Natural killer cell (primary cell): ENCODE measurements at regions of chr4 and their contacts with region 1.

Region 1: GRCh38 chr4:94451695-94452475 is at the start of gene PDLIM5:
- DNase-seq: peak; percentile 84 to 95
- ATAC-seq: peak; percentile 94 to 98 (median 95)
- H3K4me3 ChIP-seq: peak within 1 kb of the TSS; percentile 96
- H3K4me3 Mint-ChIP-seq: peak within 1 kb of the TSS; percentile 91
- H3K27ac ChIP-seq: peak within 1 kb of the TSS; percentile 80
- H3K27ac Mint-ChIP-seq: peak within 1 kb of the TSS; percentile 77 to 87
- H3K4me1 ChIP-seq: peaks cover 10% of the 10 kb centered on the region
- H3K4me1 Mint-ChIP-seq: peaks cover 24 to 26% of the 10 kb centered on the region in 2 donors
- H3K27me3 ChIP-seq: peaks cover 17% of the 10 kb centered on the region
- H3K27me3 Mint-ChIP-seq: peaks cover 11 to 24% of the 10 kb centered on the region in 2 donors
- CTCF ChIP-seq: no peak
- total RNA-seq, gene PDLIM5: 41.8 to 94.8 (median 50.5) TPM

Region 2: DNA sequence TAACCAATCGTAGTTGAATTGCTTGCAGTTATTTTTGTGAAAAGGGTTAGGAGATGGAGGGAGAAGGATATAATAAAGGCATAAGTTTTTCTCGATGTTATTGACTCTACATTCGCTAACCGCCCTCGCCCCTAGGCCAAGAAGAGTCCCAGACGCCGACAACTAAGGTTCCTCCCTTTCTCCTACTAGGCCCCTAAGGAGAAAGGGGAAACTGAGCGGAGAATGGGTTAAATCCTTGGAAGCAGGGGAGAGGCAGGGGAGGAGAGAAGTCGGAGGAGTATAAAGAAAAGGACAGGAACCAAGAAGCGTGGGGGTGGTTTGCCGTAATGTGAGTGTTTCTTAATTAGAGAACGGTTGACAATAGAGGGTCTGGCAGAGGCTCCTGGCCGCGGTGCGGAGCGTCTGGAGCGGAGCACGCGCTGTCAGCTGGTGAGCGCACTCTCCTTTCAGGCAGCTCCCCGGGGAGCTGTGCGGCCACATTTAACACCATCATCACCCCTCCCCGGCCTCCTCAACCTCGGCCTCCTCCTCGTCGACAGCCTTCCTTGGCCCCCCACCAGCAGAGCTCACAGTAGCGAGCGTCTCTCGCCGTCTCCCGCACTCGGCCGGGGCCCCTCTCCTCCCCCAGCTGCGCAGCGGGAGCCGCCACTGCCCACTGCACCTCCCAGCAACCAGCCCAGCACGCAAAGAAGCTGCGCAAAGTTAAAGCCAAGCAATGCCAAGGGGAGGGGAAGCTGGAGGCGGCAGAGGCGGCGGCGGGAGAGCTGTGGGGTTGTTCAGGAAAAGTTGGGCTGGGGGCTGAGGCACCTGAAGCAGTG is 617.4 kb before region 1 on chr4:
- intact Hi-C with region 1: no loop called
- DNase-seq: no peak
- ATAC-seq: no peak
- H3K4me3 ChIP-seq: no peak overlapping the region
- H3K4me3 Mint-ChIP-seq: no peak overlapping the region
- H3K27ac ChIP-seq: no peak overlapping the region
- H3K27ac Mint-ChIP-seq: no peak overlapping the region
- H3K4me1 ChIP-seq: no peaks in the 10 kb centered on the region
- H3K4me1 Mint-ChIP-seq: no peaks in the 10 kb centered on the region
- H3K27me3 ChIP-seq: peaks cover 32% of the 10 kb centered on the region
- H3K27me3 Mint-ChIP-seq: peaks cover 44 to 57% of the 10 kb centered on the region in 2 donors
- CTCF ChIP-seq: no peak

Region 3: DNA sequence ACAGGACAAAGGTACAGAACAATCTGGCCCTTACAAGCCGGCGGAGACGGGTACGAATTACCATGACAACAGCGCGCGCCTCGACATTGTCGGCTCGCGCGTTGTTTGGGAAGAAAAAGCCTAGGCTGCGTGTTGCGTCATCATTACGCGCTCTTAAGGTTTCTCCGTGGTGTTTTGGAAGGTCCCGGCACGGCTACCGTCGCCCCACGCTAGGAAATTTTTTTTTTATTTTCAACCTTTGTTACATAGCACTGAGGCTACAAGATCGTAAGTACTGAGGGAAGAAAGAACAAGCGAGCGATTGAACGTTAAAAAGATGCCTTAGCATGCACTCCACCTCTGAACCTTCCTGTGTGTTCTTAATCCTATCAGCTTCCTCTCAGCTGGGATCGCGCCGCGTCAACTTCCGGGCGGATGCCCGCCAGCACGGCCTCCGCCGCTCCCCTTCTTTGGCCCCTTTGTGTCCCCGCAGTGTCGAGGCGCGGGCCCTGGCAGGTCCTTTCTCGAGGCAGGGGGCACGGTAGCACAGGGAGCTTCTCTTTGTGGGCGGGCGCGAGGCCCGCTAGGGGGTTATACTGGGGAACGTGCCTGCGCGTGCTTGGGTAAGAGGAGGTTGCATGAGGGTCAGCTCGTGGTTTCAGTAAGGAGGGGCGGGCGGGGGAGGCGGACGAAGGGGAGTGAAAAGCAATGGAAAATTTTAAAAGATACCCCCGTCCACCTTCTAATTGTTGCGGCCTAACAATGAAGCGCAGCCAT is 244.2 kb before region 1 on chr4 and contains the start of gene SMARCAD1:
- intact Hi-C with region 1: loop called (anchors 5 kb)
- DNase-seq: peak; percentile 81 to 96
- ATAC-seq: peak; percentile 87 to 92 (median 88)
- H3K4me3 ChIP-seq: peak within 1 kb of the TSS; percentile 64
- H3K4me3 Mint-ChIP-seq: peak within 1 kb of the TSS; percentile 95
- H3K27ac ChIP-seq: peak within 1 kb of the TSS; percentile 84
- H3K27ac Mint-ChIP-seq: peak within 1 kb of the TSS; percentile 98 to 99
- H3K4me1 ChIP-seq: peaks cover 12% of the 10 kb centered on the region
- H3K4me1 Mint-ChIP-seq: peaks cover 20 to 40% of the 10 kb centered on the region in 2 donors
- H3K27me3 ChIP-seq: no peaks in the 10 kb centered on the region
- H3K27me3 Mint-ChIP-seq: peaks cover 7 to 11% of the 10 kb centered on the region in 2 donors
- CTCF ChIP-seq: no peak
- total RNA-seq, gene SMARCAD1: 15.5 to 20.3 (median 15.9) TPM

Region 4: DNA sequence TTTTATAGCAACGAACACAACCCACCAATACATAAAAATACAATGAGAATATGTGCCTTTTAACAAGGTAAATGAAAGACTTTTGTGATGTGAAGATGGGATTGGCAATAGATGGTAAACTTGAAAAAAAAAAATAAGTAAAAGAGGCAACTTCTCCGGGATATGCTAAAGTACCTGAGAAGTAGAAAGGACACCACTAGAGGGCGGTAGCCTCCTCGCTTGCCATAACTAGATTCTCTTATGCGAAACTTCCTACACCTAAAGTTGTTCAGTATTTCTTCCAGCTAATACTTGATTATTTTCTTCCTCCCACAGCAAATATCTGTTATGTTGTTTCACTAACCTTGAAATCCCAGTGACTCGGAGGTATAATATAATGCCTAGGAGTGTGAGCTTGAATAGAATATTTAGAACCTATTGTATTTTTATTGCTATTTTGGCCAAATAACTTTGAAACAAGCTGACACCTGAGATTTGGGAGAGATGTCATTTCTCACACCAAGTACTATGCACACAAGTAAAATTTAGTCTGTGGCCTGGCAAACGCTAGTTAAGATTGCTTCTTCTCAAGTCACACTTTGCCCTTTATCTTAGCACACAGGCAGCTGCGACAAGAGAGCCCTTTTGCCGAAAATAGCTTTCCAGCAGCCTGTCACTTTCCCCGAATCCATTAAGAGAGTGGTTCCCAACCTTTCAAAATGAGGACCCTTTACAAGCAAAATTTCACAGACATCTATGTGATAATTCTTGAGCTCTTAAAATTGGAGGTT is 45.0 kb before region 1 on chr4:
- intact Hi-C with region 1: loop called (anchors 1 kb)
- DNase-seq: peak; percentile 22 to 86
- ATAC-seq: peak; percentile 64 to 85 (median 79)
- H3K4me3 ChIP-seq: no peak overlapping the region
- H3K4me3 Mint-ChIP-seq: no peak overlapping the region
- H3K27ac ChIP-seq: no peak overlapping the region
- H3K27ac Mint-ChIP-seq: no peak overlapping the region
- H3K4me1 ChIP-seq: no peaks in the 10 kb centered on the region
- H3K4me1 Mint-ChIP-seq: no peaks in the 10 kb centered on the region
- H3K27me3 ChIP-seq: no peaks in the 10 kb centered on the region
- H3K27me3 Mint-ChIP-seq: peaks cover 3 to 12% of the 10 kb centered on the region in 2 donors
- CTCF ChIP-seq: peak; percentile 91

Region 5: DNA sequence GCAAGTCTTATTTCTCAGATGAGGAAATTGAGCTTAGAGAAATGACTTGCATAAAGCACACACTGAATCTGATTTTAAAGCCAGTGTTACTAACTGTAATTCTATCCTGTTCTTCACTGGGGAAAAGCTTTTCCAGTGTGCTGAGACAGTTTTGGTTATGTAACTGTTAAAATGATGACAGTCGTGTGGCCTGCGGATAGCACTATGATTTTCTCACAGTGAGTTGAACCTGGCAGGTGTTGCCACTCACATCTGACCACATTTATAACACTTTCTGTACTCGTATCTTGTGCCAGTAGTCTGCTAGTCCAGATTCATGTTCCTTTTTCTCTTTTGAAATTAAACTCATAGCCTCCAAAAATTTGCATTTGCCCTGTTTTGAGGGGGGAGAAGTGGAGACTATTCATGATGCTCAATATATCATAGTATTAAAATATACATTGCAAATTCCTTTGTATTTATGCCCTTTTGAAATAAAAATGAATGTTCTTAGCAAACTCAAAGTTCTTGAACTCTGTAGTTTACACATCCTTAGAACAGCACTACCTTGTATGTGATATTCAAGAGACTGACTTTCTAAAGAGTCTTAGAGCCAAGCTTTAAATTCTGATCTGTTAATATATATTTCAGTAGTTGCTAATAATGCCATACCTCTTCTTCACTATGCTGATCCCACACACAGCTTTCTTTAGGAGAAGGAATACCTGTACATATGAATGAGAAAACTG is 132.2 kb after region 1 on chr4:
- intact Hi-C with region 1: loop called (anchors 1 kb)
- DNase-seq: peak; percentile 22 to 40
- ATAC-seq: peak; percentile 96 to 100 (median 97)
- H3K4me3 ChIP-seq: no peak overlapping the region
- H3K4me3 Mint-ChIP-seq: peak overlapping the region; percentile 31
- H3K27ac ChIP-seq: no peak overlapping the region
- H3K27ac Mint-ChIP-seq: peak overlapping the region; percentile 55 to 57
- H3K4me1 ChIP-seq: no peaks in the 10 kb centered on the region
- H3K4me1 Mint-ChIP-seq: peaks cover 12 to 15% of the 10 kb centered on the region in 2 donors
- H3K27me3 ChIP-seq: no peaks in the 10 kb centered on the region
- H3K27me3 Mint-ChIP-seq: peaks cover 0 to 3% of the 10 kb centered on the region in 2 donors
- CTCF ChIP-seq: no peak